Ovary (tissue), 10 donors: ENCODE measurements at regions of chr10 and their contacts with region 1.

Region 1: GRCh38 chr10:29857843-29858701 is 201.3 kb downstream of the JCAD start:
- DNase-seq: peak; percentile 65 to 77 (median 69)
- H3K4me3 ChIP-seq: no peak overlapping the region
- H3K27ac ChIP-seq: no peak overlapping the region
- H3K4me1 ChIP-seq: no peaks in the 10 kb centered on the region
- H3K27me3 ChIP-seq: no peaks in the 10 kb centered on the region
- CTCF ChIP-seq: peak in 2 of 3 donors; percentile 57 to 61
- EP300 ChIP-seq: no peak
- POLR2A ChIP-seq: no peak

Region 2: GRCh38 chr10:29517352-29517923 is 340.6 kb before region 1 on chr10:
- intact Hi-C with region 1: loop called in 1 of 4 experiments (anchors 10 kb)
- DNase-seq: peak in 3 of 5 donors; percentile 30 to 43 (median 37)
- H3K4me3 ChIP-seq: no peak overlapping the region
- H3K27ac ChIP-seq: no peak overlapping the region
- H3K4me1 ChIP-seq: peaks cover 1% of the 10 kb centered on the region
- H3K27me3 ChIP-seq: no peaks in the 10 kb centered on the region
- CTCF ChIP-seq: peak; percentile 29 to 39 (median 31)
- EP300 ChIP-seq: no peak
- POLR2A ChIP-seq: no peak

Region 3: DNA sequence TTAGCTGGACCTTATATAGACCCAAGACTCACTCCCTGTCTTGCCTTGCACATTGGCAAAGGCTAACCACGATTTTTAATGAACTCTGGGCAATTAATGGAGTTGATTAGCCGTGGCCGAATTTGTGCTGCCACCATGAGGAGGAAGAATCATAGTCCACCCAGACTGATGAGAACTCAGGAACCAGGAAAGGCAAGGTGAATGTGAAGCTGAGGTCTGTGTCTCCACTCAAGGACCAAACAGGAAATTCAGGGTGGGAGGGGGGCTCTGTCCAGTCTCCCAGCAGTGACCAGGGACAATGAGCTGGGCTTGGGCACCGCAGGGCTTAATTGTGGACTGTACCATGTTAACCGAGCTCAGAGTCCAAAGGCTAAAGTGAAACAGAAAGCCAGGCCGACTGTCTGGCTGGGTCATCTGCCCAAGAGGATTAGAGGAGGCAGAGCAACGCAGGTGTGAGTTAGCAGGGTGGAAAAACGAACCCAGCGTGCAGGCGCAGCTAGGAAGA is 328.4 kb after region 1 on chr10:
- intact Hi-C with region 1: no loop called
- DNase-seq: no peak
- H3K4me3 ChIP-seq: no peak overlapping the region
- H3K27ac ChIP-seq: no peak overlapping the region
- H3K4me1 ChIP-seq: peaks cover 2% of the 10 kb centered on the region
- H3K27me3 ChIP-seq: no peaks in the 10 kb centered on the region
- CTCF ChIP-seq: no peak
- EP300 ChIP-seq: no peak
- POLR2A ChIP-seq: no peak